ENCODE measurements at regions of chr5 and their contacts with region 1.

Region 1: DNA sequence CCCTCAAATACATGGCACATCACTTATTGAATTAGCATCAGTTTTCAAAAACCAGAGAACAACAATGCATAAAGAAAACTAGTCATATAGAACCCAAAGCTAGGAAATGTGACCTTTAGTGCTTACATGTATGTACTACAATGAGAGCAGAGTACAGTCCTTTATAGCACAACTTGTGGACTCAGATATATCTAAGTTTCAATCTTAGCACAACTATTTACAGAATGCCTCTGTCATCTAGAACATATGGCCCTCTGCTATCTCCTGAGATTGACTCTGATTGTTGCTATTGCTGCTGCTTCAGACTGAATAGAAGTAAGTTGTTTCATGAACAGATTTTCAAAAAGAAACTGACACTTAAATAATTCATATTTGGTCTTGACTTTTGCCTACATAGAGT is 1536.2 kb downstream of the EFNA5 start:
- DNase-seq: no peak
- ATAC-seq: no peak
- H3K4me3 ChIP-seq: no peak overlapping the region
- H3K4me3 Mint-ChIP-seq: no peak overlapping the region
- H3K27ac ChIP-seq: no peak overlapping the region
- H3K27ac Mint-ChIP-seq: no peak overlapping the region
- H3K4me1 ChIP-seq: no peaks in the 10 kb centered on the region
- H3K4me1 Mint-ChIP-seq: peaks cover 0 to 2% (median 0%) of the 10 kb centered on the region in 7 donors
- H3K27me3 ChIP-seq: no peaks in the 10 kb centered on the region
- H3K27me3 Mint-ChIP-seq: no peaks in the 10 kb centered on the region

Region 2: GRCh38 chr5:105670586-105670985 is 464.0 kb before region 1 on chr5:
- CTCF ChIA-PET with region 1: no interaction called
- POLR2A ChIA-PET with region 1: no interaction called
- intact Hi-C with region 1: no loop called
- DNase-seq: no peak
- ATAC-seq: no peak
- H3K4me3 ChIP-seq: no peak overlapping the region
- H3K4me3 Mint-ChIP-seq: no peak overlapping the region
- H3K27ac ChIP-seq: no peak overlapping the region
- H3K27ac Mint-ChIP-seq: no peak overlapping the region
- H3K4me1 ChIP-seq: no peaks in the 10 kb centered on the region
- H3K4me1 Mint-ChIP-seq: no peaks in the 10 kb centered on the region
- H3K27me3 ChIP-seq: no peaks in the 10 kb centered on the region
- H3K27me3 Mint-ChIP-seq: no peaks in the 10 kb centered on the region

Region 3: GRCh38 chr5:105828821-105829220 is 305.7 kb before region 1 on chr5:
- CTCF ChIA-PET with region 1: no interaction called
- POLR2A ChIA-PET with region 1: no interaction called
- intact Hi-C with region 1: loop called in 1 of 2 experiments (anchors 5 kb)
- DNase-seq: no peak
- ATAC-seq: no peak
- H3K4me3 ChIP-seq: no peak overlapping the region
- H3K4me3 Mint-ChIP-seq: no peak overlapping the region
- H3K27ac ChIP-seq: no peak overlapping the region
- H3K27ac Mint-ChIP-seq: no peak overlapping the region
- H3K4me1 ChIP-seq: no peaks in the 10 kb centered on the region
- H3K4me1 Mint-ChIP-seq: no peaks in the 10 kb centered on the region
- H3K27me3 ChIP-seq: no peaks in the 10 kb centered on the region
- H3K27me3 Mint-ChIP-seq: no peaks in the 10 kb centered on the region

Measured in naive thymus-derived CD4-positive, alpha-beta T cell (primary cell).